AG04449 (cell line): ENCODE measurements at regions of chr5 and their contacts with region 1.

Region 1: DNA sequence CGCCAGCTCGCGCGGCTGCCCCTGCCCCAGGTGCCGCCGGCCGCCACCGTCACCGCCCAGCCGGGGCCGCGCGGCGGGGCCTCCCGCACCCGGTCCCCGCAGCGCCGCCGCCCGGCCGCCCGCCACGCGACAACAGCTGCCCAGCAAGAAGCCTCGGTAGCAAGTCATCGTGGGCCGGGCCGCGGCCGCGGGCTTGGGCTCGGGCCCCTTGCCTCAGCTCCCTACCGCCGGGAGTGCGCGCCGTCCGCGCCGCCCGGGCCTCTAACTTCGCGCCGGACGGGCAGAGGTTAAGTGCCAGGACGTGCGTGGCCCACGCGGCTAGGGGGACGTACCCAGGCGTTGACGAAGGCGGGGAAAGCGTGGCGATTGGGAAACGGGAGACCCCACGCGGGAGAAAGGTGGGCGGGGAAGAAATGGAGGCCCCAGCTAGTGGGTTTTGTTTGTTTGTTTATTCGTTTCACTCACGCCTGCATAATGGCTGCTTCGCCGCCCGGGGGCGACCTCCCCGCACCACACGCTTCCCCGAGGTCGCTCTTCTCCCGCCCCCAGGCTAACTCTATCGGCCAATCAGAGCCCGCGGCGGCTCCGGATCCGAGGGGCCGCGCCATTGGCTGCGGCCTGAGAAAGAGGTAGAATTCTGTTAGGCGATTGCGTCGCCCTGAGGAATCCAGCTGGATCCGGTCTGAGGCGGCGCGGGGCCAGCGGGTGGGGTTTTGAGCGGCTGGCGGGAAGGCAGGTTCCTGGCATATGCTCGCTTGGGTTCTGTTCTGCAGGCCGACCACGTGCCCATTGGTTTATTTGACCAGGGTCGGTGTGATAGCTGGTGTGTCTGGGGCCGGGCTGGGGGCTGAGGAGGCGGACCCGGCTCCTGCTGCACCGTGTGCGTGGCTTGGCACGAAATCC is at the start of gene NADK2:
- DNase-seq: peak; percentile 71
- H3K4me3 ChIP-seq: peak within 1 kb of the TSS; percentile 78
- CTCF ChIP-seq: peak; percentile 68

Region 2: DNA sequence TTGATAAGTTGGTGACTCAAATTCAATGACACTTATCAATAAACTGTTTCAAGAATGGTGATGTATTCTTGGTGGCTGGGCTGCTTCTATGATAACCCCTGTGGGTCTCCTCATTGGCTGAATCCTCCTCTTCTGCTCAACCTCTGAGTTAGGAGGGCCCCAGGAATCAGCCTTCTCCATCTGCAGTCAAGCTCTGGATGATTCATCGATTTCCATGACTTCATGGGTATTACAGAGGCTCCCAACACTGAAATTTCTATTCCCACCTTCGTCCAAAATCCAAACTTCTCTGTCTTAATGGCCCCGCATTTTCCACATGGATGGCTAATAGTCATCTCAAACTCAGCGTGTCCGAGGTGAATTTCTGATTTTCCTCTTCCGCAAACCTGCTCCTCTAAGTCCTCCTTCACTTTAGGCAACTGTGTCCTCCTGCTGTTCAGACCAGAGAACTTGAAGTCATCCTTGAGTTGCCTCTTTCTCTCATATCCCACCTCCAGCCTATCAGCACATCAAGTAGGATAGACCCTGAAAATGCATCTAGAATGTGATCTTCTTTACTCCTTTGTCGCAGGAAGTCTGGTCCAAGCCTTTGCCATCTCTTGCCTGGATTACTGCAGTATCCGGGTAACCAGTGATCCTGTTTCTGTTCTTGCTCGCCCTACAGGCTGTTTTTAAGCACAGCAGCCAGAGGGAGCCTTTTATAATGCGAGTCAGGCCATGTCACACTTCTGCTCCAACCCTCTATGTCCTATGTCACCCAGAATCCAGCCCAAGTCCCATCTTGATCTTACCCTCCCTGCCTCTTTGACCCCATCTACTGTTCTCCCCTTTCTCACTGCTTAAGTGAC is 426.6 kb before region 1 on chr5:
- CTCF ChIA-PET with region 1: no interaction called
- POLR2A ChIA-PET with region 1: no interaction called
- DNase-seq: no peak
- H3K4me3 ChIP-seq: no peak overlapping the region
- CTCF ChIP-seq: peak; percentile 45

Region 3: DNA sequence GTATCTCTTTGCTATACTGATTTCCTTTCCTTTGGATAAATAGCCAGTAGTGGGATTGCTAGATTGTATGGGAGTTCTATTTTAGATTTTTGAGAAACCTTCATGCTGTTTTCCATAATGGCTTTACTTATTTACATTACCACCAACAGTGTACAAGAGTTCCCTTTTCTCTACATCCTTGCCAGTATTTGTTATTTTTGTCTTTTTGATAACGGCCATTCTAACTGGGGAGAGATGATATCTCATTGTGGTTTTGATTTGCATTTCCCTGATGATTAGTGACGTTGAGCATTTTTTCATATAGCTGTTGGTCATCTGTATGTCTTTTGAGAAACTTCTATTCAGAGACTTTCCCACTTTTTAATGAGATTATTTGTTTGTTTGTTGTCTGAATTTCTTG is 26.0 kb before region 1 on chr5:
- CTCF ChIA-PET with region 1: interaction called, 23 read pairs
- POLR2A ChIA-PET with region 1: no interaction called
- DNase-seq: no peak
- H3K4me3 ChIP-seq: no peak overlapping the region
- CTCF ChIP-seq: no peak

Region 4: GRCh38 chr5:36230151-36230793 is 11.6 kb before region 1 on chr5:
- CTCF ChIA-PET with region 1: interaction called, 17 read pairs
- POLR2A ChIA-PET with region 1: no interaction called
- DNase-seq: no peak
- H3K4me3 ChIP-seq: no peak overlapping the region
- CTCF ChIP-seq: no peak

Region 5: GRCh38 chr5:36252722-36253365 is 11.0 kb after region 1 on chr5:
- CTCF ChIA-PET with region 1: interaction called, 27 read pairs
- POLR2A ChIA-PET with region 1: no interaction called
- DNase-seq: no peak
- H3K4me3 ChIP-seq: no peak overlapping the region
- CTCF ChIP-seq: no peak

Region 6: DNA sequence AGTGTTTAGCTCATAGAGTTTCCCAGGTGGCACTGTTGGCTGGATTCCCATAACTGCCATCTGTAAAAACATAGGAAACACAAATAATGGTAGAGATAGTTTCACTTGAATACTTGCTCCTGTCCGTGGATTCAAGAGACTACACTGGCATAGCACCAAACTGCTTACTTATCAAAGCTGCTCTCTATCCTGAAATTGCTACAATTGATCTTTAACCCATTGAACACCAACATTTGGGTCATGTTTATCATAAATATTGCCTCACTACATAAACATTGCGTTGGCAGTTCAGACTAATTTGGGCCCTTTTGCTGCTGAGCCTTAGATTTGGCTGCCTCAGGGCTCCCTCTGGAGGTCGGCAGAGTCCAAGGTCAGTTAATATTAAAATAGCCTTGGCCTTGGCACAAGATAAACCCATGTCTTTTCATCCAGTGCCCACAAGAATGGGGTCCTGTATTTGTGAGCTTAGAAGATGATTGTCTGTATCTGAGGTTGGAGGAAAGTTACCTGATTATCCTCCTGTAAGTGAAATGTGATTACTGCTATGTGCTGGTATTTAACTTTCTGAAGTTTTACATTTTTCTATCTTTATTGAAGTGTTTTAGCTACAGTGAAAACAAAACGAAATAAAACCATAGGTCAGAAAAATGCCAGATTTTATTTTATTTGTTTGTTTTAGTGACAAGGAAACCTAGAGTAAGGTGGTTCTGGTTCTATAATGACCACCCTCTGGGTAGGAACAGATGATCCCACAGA is 63.9 kb after region 1 on chr5:
- CTCF ChIA-PET with region 1: interaction called, 12 read pairs
- POLR2A ChIA-PET with region 1: no interaction called
- DNase-seq: no peak
- H3K4me3 ChIP-seq: no peak overlapping the region
- CTCF ChIP-seq: peak; percentile 59

Region 7: DNA sequence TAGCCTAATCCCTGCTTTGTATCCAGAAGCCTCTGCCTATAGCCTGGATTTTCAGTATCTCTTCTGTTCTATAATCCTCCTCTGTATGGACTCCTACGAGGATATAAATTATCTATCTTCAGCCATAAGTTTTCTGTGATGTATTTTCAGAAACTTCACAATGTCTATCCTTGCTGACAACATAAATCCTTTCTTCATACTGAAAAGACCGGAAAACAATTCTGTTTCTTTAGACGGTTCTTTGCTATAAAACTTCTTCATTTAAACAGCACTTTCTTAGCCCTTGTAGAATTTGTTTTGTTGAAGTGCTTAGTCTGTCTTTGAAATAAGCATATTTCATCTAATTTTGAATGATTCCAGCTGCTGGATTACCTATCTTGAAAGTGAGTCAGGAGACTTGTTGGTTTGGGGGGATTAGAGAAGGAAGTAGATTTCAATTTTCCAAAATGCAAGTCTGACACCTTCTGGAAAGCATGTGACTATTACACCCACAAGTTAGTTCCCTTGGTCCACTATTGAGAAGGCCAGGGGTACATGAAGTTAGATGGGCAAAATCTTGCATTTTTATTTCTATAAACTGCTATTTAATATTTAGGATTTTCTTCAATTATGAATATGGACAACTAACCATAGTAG is 156.1 kb after region 1 on chr5:
- CTCF ChIA-PET with region 1: interaction called, 31 read pairs
- POLR2A ChIA-PET with region 1: no interaction called
- DNase-seq: no peak
- H3K4me3 ChIP-seq: no peak overlapping the region
- CTCF ChIP-seq: peak; percentile 40